ENCODE measurements at regions of chr6 and their contacts with region 1.

Region 1: DNA sequence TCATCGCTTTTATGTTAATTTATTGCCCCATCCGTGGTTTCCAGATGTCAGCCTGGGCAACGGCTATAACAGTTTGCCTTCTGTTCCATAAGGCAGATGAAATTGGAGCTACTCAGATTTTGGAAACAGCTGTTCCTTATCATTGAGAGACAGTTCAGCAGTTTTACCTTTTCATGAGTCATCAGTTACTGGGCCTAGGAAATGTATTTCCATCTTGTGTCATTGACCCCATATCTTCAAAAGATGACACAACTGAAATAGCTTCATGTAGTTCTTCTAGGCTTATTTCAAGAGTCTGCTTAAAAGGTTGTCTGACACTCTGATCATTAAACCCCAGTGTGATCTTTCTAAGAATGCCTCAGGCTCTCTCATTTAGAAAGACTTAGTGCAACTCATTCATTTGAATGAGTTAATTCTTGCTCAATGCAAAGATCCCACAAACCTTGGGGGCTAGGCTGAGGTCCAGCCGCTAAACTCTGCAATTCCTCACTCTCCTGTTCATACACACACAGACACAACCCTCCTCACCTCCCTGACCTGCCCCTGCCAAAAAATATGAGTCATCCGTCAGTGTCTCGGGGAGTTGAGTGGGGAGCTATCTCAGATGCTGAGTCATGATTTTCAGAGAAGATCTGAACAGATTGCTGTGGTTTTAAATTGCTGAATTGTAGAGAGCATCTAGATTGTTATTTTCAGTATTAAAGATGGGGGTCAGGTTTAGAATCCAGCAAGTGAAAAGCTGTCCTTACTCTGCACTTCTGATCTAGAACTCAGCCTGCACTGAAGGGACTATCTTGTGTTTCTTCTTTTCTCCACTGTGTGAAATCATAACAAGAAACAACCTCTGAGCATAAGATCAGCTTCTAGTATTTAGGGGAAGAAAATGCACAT is 61.8 kb downstream of the RPP40 start:
- ATAC-seq: peak; percentile 79 to 93 (median 88)
- H3K4me3 ChIP-seq: no peak overlapping the region
- H3K27ac ChIP-seq: no peak overlapping the region
- H3K4me1 ChIP-seq: peaks cover 23 to 27% of the 10 kb centered on the region in 2 donors

Region 2: DNA sequence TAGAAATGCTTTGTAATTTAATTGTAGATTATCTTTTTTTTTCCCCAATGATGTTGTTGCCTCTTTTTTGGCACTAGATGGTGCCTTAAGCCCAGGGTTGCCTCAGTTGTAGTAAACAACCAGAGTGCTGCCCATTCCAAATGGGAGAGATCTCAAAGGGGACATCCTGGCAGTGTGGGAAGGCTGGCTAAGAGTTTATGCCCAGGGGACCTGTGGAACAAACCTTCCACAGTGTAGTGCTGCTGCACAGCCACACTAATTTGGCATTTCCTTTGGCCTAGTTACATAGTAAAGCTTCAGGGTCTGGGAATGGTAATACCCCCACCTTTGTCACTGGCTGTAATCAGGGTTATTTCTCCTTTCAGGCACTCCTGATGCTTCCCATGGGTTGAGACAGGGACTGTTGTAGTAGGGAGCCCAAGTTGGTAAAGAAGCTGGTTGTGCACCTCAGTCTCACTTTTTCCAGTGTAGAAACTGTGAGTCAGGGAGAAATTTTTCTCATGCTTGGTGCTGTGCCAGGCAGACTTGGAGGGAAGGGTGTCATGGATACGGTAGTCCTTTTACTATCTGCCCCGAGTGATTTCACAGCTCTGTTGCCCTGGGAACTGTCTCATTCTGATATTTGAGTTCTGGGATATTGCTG is 628.9 kb before region 1 on chr6:
- in situ Hi-C with region 1: loop called in 1 of 9 experiments (anchors 25 kb)
- ATAC-seq: peak in 6 of 8 experiments; percentile 8 to 78 (median 39)
- H3K4me3 ChIP-seq: no peak overlapping the region
- H3K27ac ChIP-seq: peak overlapping the region in 1 of 2 donors; percentile 31
- H3K4me1 ChIP-seq: peaks cover 16 to 19% of the 10 kb centered on the region in 2 donors

Measured in motor neuron (in vitro differentiated cells).